ENCODE measurements at regions of chr3 and their contacts with region 1.

Region 1: GRCh38 chr3:38131621-38132369 is 5.1 kb downstream of the ACAA1 start:
- DNase-seq: no peak
- ATAC-seq: peak; percentile 60
- H3K4me3 ChIP-seq: no peak overlapping the region
- H3K27ac ChIP-seq: no peak overlapping the region
- H3K4me1 ChIP-seq: peaks cover 18% of the 10 kb centered on the region
- H3K27me3 ChIP-seq: no peaks in the 10 kb centered on the region
- CTCF ChIP-seq: peak; percentile 59 to 67 (median 61)
- EP300 ChIP-seq: no peak
- POLR2A ChIP-seq: no peak
- RAD21 ChIP-seq: peak; percentile 56

Region 2: DNA sequence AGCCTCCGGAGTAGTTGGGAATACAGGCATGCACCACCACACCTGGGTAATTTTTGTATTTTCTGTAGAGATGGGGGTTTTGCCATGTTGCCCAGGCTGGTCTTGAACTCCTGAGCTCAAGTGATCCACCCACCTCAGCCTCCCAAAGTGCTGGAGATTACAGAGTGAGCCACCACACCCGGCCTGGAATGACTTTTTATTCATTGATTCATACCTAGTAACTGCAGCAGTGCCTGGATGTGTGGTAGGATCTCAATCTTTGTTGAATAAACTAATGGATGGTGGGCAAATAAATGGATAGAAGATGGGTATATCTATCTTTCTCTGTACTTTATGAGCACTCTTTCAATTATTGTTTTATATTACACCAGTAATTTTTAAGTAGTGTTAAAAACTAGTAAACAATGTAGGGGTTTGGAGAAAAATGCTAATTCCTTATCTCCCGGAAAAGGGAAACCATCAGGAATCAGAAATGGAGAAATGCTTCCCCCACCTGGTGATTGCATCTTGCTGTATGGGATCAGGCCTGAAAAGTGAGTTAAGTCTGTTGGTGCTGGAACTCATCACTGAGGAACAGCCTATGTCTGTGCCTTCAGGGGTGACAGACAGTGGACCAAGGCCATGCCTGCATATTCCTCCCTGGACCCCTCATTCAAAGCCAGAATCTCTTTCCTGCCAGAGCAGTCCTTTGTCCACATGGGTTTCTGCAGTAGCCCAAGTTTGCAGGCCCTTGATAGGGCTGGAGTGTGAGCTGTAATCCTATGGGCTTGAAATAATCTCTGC is 431.1 kb before region 1 on chr3:
- CTCF ChIA-PET with region 1: no interaction called
- POLR2A ChIA-PET with region 1: no interaction called
- RAD21 ChIA-PET with region 1: no interaction called
- SMC1A ChIA-PET with region 1: no interaction called
- in situ Hi-C with region 1: no loop called
- intact Hi-C with region 1: no loop called
- DNase-seq: no peak
- ATAC-seq: no peak
- H3K4me3 ChIP-seq: no peak overlapping the region
- H3K27ac ChIP-seq: no peak overlapping the region
- H3K4me1 ChIP-seq: no peaks in the 10 kb centered on the region
- H3K27me3 ChIP-seq: peaks cover 0 to 1% of the 10 kb centered on the region in 2 experiments; a peak in 2 of 4 replicates
- CTCF ChIP-seq: no peak
- EP300 ChIP-seq: no peak
- POLR2A ChIP-seq: no peak
- RAD21 ChIP-seq: no peak

Region 3: DNA sequence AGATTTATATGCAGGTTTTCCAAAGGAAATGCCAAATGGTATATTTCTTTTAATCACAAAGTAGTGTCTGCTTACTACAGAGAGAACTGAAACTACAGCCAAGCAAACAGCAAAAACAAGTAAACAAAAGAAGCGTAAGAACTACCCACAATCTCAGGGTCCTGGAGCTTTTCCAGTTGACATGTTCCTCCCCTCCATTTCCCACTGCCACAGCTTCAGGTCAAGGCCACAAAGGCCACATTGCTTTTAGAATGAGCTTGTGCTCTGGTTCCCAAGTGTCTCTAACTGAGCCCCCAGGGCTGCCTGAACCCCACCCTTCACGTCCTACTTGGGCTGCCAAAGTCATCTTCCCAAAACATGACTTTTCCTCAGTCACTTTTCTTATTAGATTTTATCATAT is 246.0 kb before region 1 on chr3:
- CTCF ChIA-PET with region 1: no interaction called
- POLR2A ChIA-PET with region 1: no interaction called
- RAD21 ChIA-PET with region 1: no interaction called
- SMC1A ChIA-PET with region 1: no interaction called
- in situ Hi-C with region 1: no loop called
- intact Hi-C with region 1: no loop called
- DNase-seq: no peak
- ATAC-seq: no peak
- H3K4me3 ChIP-seq: no peak overlapping the region
- H3K27ac ChIP-seq: no peak overlapping the region
- H3K4me1 ChIP-seq: no peaks in the 10 kb centered on the region
- H3K27me3 ChIP-seq: peaks cover 0 to 2% of the 10 kb centered on the region in 2 experiments; a peak in 1 of 4 replicates
- CTCF ChIP-seq: no peak
- EP300 ChIP-seq: no peak
- POLR2A ChIP-seq: no peak
- RAD21 ChIP-seq: no peak

Region 4: GRCh38 chr3:38164966-38165680 is 33.3 kb after region 1 on chr3 and contains the start of gene OXSR1:
- CTCF ChIA-PET with region 1: interaction called, 74 read pairs
- POLR2A ChIA-PET with region 1: interaction called, 146 read pairs
- RAD21 ChIA-PET with region 1: interaction called, 62 read pairs
- SMC1A ChIA-PET with region 1: interaction called, 92 read pairs
- in situ Hi-C with region 1: no loop called
- intact Hi-C with region 1: no loop called
- DNase-seq: peak; percentile 100
- ATAC-seq: peak; percentile 89
- H3K4me3 ChIP-seq: peak within 1 kb of the TSS; percentile 92
- H3K27ac ChIP-seq: peak within 1 kb of the TSS; percentile 100
- H3K4me1 ChIP-seq: peaks cover 4% of the 10 kb centered on the region; the same call in 1 of the 2 replicates
- H3K27me3 ChIP-seq: no peaks in the 10 kb centered on the region
- CTCF ChIP-seq: no peak
- EP300 ChIP-seq: no peak; a peak in 1 of 4 replicates
- POLR2A ChIP-seq: peak; percentile 93
- RAD21 ChIP-seq: no peak
- polyA plus RNA-seq, gene OXSR1: 12.4 to 16.9 TPM

Region 5: GRCh38 chr3:38235466-38235865 is 103.7 kb after region 1 on chr3:
- CTCF ChIA-PET with region 1: interaction called, 9 read pairs
- POLR2A ChIA-PET with region 1: no interaction called
- RAD21 ChIA-PET with region 1: interaction called, 3 read pairs
- SMC1A ChIA-PET with region 1: interaction called, 11 read pairs
- in situ Hi-C with region 1: no loop called
- intact Hi-C with region 1: no loop called
- DNase-seq: no peak
- ATAC-seq: no peak
- H3K4me3 ChIP-seq: no peak overlapping the region
- H3K27ac ChIP-seq: no peak overlapping the region
- H3K4me1 ChIP-seq: peaks cover 12% of the 10 kb centered on the region
- H3K27me3 ChIP-seq: no peaks in the 10 kb centered on the region
- CTCF ChIP-seq: no peak
- EP300 ChIP-seq: no peak
- POLR2A ChIP-seq: no peak
- RAD21 ChIP-seq: no peak

Region 6: GRCh38 chr3:38281895-38282675 is 150.3 kb after region 1 on chr3 and contains the start of gene SLC22A14:
- CTCF ChIA-PET with region 1: interaction called, 11 read pairs
- POLR2A ChIA-PET with region 1: no interaction called
- RAD21 ChIA-PET with region 1: interaction called, 9 read pairs
- SMC1A ChIA-PET with region 1: interaction called, 4 read pairs
- in situ Hi-C with region 1: no loop called
- intact Hi-C with region 1: no loop called
- DNase-seq: no peak
- ATAC-seq: peak; percentile 60
- H3K4me3 ChIP-seq: no peak within 1 kb of the TSS
- H3K27ac ChIP-seq: no peak within 1 kb of the TSS
- H3K4me1 ChIP-seq: no peaks in the 10 kb centered on the region
- H3K27me3 ChIP-seq: no peaks in the 10 kb centered on the region; a peak in 1 of 4 replicates
- CTCF ChIP-seq: peak in 2 of 3 experiments; percentile 25 to 38; a peak in 3 of 6 replicates
- EP300 ChIP-seq: no peak
- POLR2A ChIP-seq: no peak
- RAD21 ChIP-seq: peak; percentile 25
- polyA plus RNA-seq, gene SLC22A14: not detected

Region 7: DNA sequence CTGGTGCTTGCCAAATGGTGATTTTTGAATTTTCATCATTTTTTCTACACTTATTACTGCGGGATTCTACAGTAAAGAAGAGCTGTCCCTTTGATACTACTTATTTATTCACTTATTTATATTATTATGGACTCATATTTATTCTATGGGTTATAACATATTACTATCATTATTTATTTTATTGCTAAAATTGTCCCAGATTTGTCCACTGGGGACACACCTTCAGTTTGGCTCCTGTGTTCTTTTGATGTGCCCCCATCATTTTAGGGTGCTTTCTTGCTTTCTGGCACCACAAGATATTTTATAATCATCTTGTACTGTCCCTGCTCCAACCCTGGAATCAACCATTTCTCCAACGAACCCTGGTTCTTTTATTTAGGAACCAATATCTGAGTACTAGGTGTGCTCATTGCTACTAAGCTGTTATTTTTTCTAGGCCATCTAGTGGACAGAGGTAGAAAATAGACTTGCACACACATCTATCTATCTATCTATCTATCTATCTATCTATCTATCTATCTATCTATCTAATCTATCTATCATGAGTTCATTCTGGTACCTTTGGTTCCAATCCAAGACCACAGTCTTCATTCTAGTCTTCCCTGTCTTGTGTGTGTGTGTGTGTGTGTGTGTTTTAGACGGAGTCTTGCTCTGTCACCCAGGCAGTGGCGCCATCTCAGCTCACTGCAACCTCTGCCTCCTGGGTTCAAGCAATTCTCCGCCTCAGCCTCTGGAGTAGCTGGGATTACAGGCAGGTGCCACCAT is 166.3 kb after region 1 on chr3:
- CTCF ChIA-PET with region 1: interaction called, 54 read pairs
- POLR2A ChIA-PET with region 1: no interaction called
- RAD21 ChIA-PET with region 1: interaction called, 3 read pairs
- SMC1A ChIA-PET with region 1: interaction called, 18 read pairs
- in situ Hi-C with region 1: no loop called
- intact Hi-C with region 1: no loop called
- DNase-seq: peak; percentile 5
- ATAC-seq: peak; percentile 83
- H3K4me3 ChIP-seq: no peak overlapping the region
- H3K27ac ChIP-seq: no peak overlapping the region
- H3K4me1 ChIP-seq: no peaks in the 10 kb centered on the region
- H3K27me3 ChIP-seq: no peaks in the 10 kb centered on the region
- CTCF ChIP-seq: peak; percentile 23 to 40 (median 28); a peak in 3 of 6 replicates
- EP300 ChIP-seq: no peak
- POLR2A ChIP-seq: no peak
- RAD21 ChIP-seq: peak; percentile 35

Region 8: GRCh38 chr3:38346587-38347410 is 215.0 kb after region 1 on chr3 and contains the start of gene XYLB:
- CTCF ChIA-PET with region 1: interaction called, 13 read pairs
- POLR2A ChIA-PET with region 1: interaction called, 3 read pairs
- RAD21 ChIA-PET with region 1: interaction called, 8 read pairs
- SMC1A ChIA-PET with region 1: interaction called, 3 read pairs
- in situ Hi-C with region 1: no loop called
- intact Hi-C with region 1: no loop called
- DNase-seq: peak; percentile 44
- ATAC-seq: peak; percentile 98
- H3K4me3 ChIP-seq: peak within 1 kb of the TSS; percentile 86
- H3K27ac ChIP-seq: peak within 1 kb of the TSS; percentile 42
- H3K4me1 ChIP-seq: no peaks in the 10 kb centered on the region; the same call in 1 of the 2 replicates
- H3K27me3 ChIP-seq: no peaks in the 10 kb centered on the region
- CTCF ChIP-seq: peak; percentile 84 to 89 (median 88)
- EP300 ChIP-seq: peak in 1 of 2 experiments; percentile 58; a peak in 1 of 4 replicates
- POLR2A ChIP-seq: peak; percentile 79
- RAD21 ChIP-seq: peak; percentile 53
- polyA plus RNA-seq, gene XYLB: 0.60 to 0.80 TPM

Region 9: GRCh38 chr3:38386992-38387750 is 255.4 kb after region 1 on chr3:
- CTCF ChIA-PET with region 1: no interaction called
- POLR2A ChIA-PET with region 1: no interaction called
- RAD21 ChIA-PET with region 1: no interaction called
- SMC1A ChIA-PET with region 1: no interaction called
- in situ Hi-C with region 1: no loop called
- intact Hi-C with region 1: no loop called
- DNase-seq: no peak
- ATAC-seq: no peak
- H3K4me3 ChIP-seq: no peak overlapping the region
- H3K27ac ChIP-seq: no peak overlapping the region
- H3K4me1 ChIP-seq: no peaks in the 10 kb centered on the region
- H3K27me3 ChIP-seq: no peaks in the 10 kb centered on the region
- CTCF ChIP-seq: no peak
- EP300 ChIP-seq: no peak
- POLR2A ChIP-seq: no peak
- RAD21 ChIP-seq: no peak

Measured in GM12878 (cell line).